ENCODE measurements at regions of chr6 and their contacts with region 1.

Region 1: DNA sequence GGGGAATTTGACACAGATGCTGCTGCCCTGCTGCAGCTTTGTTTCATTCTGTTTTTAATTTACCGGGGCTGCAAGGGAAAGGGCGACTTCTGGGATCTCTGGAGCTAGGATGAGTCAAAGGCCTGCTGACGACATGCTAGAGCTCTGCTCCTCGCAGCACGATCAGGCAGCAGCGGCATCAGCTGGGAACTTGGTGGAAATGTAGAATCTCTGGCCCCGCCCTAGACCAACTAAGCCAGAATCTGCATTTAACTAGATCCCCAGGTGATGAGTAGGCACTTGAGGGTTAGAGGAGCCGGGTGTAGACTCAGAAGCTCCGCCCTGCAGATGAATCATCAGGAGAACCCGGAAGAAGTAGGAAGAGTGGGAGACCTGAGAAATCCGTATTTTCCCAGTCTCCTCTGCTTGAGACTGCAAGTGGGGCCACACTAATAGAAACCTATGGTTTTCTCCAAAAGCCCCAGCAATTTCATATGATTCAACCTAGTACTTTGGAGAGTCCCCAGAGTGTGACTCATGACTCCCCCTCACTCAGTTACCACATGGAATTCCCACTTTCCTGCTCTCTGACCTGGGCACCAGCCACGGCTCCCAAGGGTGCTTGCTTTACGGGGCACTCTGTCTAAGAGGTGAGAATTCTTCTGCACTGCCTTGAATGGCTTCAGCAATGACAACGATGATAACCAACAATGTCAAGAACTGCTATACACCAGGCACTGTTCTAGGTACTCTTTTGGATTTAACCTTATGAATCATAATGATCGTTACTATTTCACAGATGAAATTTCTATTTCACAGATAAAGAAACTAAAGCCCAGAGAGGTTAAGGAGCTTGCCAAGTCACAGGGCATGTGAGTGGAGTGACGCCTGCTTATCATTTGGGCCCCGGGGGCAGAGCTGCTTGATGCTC is 18.1 kb downstream of the TUBB2B start:
- DNase-seq: peak; percentile 84 to 94
- ATAC-seq: peak; percentile 98
- H3K4me3 ChIP-seq: peak overlapping the region; percentile 16; the same call in 1 of the 3 replicates
- H3K27ac ChIP-seq: peak overlapping the region; percentile 75 to 84
- H3K4me1 ChIP-seq: peaks cover 16% of the 10 kb centered on the region
- CTCF ChIP-seq: peak; percentile 34
- EP300 ChIP-seq: no peak
- POLR2A ChIP-seq: no peak
- RAD21 ChIP-seq: peak; percentile 57 to 63

Region 2: GRCh38 chr6:3125815-3126214 is 83.6 kb before region 1 on chr6:
- CTCF ChIA-PET with region 1: interaction called, 11 read pairs
- POLR2A ChIA-PET with region 1: interaction called, 6 read pairs
- DNase-seq: no peak
- ATAC-seq: no peak; a peak in 1 of 6 replicates
- H3K4me3 ChIP-seq: no peak overlapping the region
- H3K27ac ChIP-seq: no peak overlapping the region
- H3K4me1 ChIP-seq: no peaks in the 10 kb centered on the region
- CTCF ChIP-seq: no peak
- EP300 ChIP-seq: no peak
- POLR2A ChIP-seq: no peak
- RAD21 ChIP-seq: no peak

Region 3: DNA sequence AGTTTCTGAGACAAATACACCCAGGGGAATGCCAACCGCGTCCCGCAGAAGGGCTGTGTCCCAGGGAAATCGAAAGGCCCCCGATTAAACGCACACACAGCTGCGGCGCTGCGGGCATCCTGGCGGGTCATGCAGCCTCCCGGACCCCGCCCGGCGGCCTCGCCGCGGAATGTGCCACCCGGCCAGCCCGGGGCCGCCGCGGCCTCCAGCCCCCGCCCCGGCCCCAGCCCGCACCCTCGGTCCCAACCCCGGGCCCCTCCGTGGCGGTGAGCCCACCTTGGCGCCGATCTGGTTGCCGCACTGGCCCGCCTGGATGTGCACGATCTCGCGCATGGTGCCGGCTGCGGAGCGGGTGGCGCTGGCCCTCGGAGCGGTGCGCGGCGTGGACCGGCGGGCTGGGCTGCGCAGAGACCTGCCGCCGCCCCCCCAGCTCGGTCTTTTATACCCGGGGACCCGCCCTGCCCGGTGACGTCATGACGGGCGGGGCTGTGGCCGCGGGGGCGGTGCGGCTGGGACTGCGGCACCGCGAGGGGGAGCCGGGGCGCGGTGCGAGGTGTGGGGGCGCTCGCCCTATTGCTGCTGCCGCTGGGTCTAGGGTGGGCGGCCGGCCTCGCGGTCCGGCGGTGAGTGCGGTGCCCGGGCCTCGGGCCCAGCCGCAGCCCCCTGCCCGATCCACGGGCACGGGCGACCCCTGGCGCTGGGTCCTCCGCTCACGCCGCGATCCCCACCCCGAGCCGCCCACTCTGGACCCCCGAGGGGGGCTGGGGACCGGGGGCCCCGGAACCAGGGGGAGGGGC is 52.0 kb before region 1 on chr6 and contains the start of gene TUBB2A:
- CTCF ChIA-PET with region 1: interaction called, 8 read pairs
- POLR2A ChIA-PET with region 1: interaction called, 18 read pairs
- DNase-seq: peak; percentile 63 to 65
- ATAC-seq: peak; percentile 64 to 72
- H3K4me3 ChIP-seq: peak within 1 kb of the TSS; percentile 100
- H3K27ac ChIP-seq: peak within 1 kb of the TSS; percentile 96 to 99
- H3K4me1 ChIP-seq: peaks cover 27% of the 10 kb centered on the region
- CTCF ChIP-seq: peak; percentile 53
- EP300 ChIP-seq: no peak
- POLR2A ChIP-seq: peak; percentile 93
- RAD21 ChIP-seq: peak in 1 of 2 experiments; percentile 46; a peak in 2 of 5 replicates
- polyA plus RNA-seq, gene TUBB2A: 19.7 and 23.9 TPM in 2 replicates

Region 4: DNA sequence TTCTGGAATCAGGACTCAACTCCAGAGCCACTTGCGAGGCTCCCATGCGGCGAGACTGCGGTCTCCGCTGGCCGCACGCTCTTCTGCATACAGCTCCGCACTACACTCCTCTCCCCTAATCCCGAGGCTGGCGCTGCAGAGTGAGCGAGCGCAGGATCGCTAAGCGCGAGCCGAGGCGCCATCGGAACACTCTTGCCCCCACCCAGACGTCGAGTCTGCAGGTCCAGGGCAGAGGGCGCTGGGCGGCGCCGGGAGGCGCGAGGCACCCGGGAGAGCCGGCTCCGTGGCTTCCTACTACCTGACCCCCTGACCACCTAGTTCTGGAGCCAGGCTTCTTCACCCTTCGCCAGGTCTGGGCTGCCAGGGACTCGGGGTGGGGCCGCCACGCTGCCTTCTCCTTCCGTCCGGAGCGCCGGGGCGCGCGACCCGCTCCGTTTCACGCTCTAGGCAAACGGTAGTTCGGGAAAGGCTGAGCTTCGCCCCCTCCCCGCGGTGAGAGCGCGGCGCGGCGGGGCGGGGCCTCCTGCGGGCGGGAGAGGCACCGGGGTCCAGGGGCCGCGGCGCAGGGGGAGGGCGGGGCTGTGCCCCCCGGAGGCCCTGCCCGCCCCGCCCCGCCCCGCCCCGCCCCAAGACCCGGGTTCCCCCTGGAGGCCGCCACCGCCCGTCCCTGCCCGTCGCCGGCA is 46.7 kb before region 1 on chr6:
- CTCF ChIA-PET with region 1: interaction called, 7 read pairs
- POLR2A ChIA-PET with region 1: interaction called, 18 read pairs
- DNase-seq: peak; percentile 55 to 77
- ATAC-seq: peak; percentile 88 to 90
- H3K4me3 ChIP-seq: peak overlapping the region; percentile 65
- H3K27ac ChIP-seq: peak overlapping the region; percentile 95 to 100
- H3K4me1 ChIP-seq: peaks cover 37% of the 10 kb centered on the region
- CTCF ChIP-seq: no peak
- EP300 ChIP-seq: no peak
- POLR2A ChIP-seq: peak; percentile 50
- RAD21 ChIP-seq: no peak

Region 5: DNA sequence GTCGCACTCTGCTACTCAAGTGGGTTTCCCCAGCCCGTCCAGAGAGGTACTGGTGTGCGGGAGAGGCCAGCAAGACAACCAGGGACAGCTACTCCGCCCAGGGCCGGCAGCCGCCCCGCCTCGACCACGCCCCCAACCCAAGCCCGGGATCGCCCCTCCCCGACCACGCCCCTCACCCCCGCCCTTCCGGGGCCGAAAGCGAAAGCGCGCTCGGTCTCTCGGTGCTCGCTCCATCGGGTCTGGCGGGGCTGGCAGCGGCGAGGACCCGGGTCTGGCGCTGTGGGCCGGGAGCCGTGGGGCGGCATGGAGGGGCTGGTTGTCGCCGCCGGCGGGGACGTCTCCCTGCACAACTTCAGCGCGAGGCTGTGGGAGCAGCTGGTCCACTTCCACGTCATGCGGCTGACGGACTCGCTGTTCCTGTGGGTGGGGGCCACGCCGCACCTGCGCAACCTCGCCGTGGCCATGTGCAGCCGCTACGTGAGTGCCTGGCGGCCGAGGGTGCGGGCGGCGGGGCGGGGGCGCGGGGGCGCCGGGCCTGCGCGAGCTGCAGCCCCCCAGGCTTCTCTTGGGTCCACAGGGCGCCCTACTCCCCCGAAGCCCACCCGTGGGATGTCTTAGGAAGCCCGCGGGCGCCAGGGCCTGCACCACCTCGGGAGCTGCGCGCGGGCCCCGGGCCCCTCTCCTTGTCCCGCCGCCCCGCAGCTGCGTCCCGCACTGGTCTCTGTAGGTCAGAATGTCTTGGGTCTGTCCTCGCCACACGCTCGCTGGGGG is 49.5 kb after region 1 on chr6 and contains the start of gene PSMG4:
- CTCF ChIA-PET with region 1: no interaction called
- POLR2A ChIA-PET with region 1: no interaction called
- DNase-seq: peak; percentile 73 to 84
- ATAC-seq: peak; percentile 85 to 93
- H3K4me3 ChIP-seq: peak within 1 kb of the TSS; percentile 92
- H3K27ac ChIP-seq: peak within 1 kb of the TSS; percentile 91 to 99
- H3K4me1 ChIP-seq: peaks cover 11% of the 10 kb centered on the region
- CTCF ChIP-seq: no peak
- EP300 ChIP-seq: no peak
- POLR2A ChIP-seq: peak; percentile 60
- RAD21 ChIP-seq: no peak
- polyA plus RNA-seq, gene PSMG4: 12.9 and 15.0 TPM in 2 replicates

Measured in A549 (cell line).